RWPE1 (cell line): ENCODE measurements at regions of chr15 and their contacts with region 1.

Region 1: DNA sequence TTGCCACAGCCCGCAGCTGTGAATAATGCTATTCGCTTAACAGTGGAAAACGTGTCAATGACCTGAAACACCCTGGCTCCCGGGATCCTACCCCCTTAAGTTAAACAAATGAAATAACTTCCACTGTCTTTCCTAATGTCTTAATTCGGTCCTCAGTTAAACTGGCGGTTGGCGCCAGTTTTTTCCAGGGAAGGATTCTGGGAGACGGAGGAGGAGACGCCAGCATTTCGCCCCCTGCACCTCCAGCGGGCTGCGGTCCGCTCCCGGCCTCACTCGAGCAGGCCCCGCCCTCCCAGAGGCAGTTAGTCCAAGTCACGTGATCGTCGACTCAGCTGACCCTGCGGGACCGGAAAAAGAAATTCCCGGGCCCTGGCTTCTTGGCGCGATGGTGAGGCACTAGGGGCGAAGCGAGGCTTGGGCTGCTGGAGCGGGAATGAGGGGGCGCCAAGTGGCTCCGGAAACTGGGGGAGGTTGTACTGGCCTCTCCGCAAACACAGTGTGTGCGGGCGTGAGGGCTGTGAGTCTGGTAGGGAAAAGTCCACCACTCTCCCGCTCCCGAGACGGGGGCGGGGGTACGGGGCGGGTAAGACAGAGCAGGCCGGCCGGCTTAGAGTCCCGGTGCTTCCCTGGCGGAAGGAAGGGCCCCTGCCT is at the start of gene COMMD4:
- DNase-seq: peak; percentile 75
- H3K27ac ChIP-seq: peak within 1 kb of the TSS; percentile 68
- CTCF ChIP-seq: no peak

Region 2: GRCh38 chr15:74682954-74683353 is 652.9 kb before region 1 on chr15:
- CTCF ChIA-PET with region 1: no interaction called
- POLR2A ChIA-PET with region 1: interaction called, 18 read pairs
- DNase-seq: no peak
- H3K27ac ChIP-seq: no peak overlapping the region
- CTCF ChIP-seq: no peak

Region 3: DNA sequence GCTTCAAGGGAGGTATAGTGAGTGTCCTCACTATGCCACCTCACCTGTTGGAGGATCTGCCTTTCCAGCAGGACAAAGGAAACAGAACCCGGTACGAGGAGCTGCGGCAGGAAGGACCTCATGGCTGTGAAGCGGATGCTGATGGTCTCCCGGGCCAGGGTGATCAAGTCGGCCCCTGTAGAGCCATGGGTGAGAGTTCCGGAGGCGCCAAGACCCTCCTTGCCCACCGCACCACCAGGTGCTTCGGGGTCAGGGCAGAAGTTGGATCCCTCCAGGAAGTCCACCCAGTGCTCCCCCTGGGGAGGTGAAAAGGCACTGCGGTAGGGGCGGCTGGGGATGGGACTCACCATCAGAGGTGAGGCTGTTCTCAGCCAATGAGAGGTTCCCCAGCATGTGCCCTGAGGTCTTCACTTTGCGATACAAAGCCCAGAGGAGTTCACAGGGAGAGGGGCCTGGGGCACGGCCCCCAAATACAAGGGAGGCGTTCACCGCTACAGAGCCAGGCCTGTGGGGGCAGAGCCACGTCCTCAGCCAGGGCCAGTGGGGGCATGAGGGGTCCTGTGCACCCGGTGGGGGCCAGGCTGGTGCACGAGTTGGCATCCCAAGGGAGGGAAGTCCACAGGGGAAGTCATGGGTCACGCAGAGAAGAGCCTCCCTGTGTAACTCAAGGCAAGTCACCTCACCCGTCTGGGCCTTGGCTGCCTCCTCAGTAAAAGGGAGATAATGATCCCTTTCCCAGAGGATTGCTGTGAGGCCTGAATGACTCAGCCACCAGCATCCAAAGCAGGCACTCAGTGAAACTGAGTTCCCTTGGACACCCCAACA is 106.4 kb before region 1 on chr15:
- CTCF ChIA-PET with region 1: no interaction called
- POLR2A ChIA-PET with region 1: no interaction called
- DNase-seq: no peak
- H3K27ac ChIP-seq: no peak overlapping the region
- CTCF ChIP-seq: no peak